ENCODE measurements at regions of chr6 and their contacts with region 1.

Region 1: DNA sequence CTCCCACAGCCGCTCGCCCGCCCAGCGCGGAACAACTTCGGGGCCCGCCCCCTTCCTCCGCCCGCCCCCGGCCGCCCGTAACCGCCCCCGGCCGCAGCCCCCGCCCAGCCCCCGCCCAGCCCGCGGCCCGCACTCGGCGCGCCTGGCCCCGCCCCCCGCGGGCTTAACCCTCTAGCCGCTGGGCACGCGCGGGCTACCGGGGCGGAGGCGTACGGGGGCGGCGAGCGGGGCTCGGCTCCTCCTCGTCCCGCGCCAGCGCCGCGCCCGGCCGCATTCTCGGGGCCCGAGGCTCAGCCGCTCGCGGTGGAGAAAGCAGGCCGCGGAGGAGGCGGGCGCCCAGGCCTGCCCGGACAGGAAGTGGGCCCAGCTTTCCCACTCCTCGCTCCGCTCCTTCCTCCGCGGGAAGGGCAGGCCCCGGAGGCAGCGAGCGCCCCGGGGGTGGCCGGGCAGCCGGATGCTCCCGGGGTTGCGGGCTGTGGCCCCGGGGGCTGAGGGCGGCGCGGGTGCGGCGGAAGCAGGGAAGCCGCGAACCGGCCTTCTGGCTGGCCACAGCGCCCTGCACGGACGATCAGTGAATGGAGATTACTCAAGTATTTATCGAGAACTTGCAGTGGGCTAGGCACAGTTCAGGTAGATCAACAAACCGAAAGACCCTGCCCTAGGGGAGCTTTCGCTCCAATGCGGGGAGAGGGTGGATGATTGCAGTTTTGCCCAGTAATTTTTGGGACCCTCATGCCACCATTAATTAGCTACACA is at the start of gene TRAM2:
- DNase-seq: peak in 41 of 42 donors; percentile 41 to 91 (median 80)

Region 2: DNA sequence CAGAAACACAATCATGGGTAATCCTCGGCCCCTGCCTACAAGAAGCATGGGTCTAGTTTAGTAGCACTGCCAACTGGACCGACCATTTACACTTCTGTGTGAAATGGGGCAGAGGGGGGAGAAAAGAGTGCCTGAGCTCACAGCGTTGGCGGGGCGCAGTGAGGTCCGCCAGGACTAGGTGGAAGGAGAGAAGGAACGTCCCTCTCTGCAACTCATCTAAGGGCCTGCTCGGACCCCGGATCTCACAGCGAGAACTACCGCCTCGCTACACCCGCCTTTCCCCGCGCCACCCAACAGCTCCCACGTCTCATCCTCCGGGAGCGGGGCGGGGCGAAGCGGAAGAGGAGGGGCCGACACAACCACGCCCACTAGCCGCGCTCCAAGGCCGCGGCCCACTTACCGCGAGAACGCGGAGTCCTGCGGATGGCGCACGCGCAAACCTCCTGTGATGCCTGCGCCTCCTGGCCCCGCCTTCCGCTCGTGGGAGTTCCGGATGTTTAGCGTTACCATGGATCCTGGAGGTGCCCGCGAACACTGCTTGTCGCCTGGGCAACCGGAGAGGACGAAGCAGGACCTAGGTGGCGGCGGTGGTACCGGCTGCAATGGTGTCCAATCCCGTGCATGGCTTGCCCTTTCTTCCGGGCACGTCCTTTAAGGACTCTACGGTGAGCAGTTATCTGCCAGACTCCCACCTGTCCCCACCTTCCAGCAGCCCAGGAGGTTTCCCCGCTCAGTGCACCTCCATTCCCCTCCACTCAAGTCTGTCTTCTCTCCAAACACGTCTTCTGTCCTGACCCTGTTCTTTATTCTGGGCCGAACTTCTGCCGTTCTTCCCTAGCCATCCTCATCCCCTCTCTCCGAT is 157.2 kb before region 1 on chr6 and contains the start of gene EFHC1:
- intact Hi-C with region 1: loop called (anchors 5 kb)
- DNase-seq: peak; percentile 95 to 99 (median 98)

Region 3: DNA sequence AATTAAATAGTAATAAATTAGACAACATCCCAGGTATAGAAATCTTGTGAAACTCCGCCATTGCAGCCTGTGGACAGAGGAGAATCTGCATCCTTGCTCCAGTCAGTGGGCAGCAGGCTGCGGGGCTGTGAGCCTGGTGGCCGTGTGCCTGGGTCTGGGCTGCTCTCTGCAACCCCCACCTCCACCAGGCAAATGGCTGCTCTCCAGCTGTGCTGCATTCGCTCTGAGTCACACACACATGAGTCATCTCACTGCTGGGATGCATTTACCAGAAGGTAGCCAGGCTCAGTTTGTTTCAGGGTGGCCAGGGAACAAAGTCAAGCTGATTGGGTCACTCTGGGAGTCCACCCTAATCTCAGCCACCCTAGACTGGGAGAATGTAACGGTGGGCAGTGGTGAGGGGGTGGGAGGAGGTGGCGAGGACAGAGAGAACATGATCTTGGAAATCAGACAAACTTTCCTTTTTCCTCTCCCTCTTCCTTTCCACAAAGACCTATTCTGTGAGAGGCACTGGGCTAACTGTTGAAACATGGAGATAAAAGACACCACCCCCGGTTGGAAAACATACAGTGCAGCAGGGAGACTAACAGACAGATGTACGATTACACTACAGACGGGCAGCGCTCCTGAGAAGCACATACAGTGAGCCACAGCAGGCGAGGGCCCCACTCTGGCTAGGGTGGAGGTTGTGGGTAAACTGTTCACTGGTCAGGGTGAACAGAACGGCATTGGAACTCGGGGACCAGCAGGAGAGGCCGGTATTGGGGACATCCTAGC is 59.5 kb before region 1 on chr6:
- intact Hi-C with region 1: loop called (anchors 10 kb)
- DNase-seq: peak; percentile 55 to 95 (median 77)

Region 4: GRCh38 chr6:52664186-52664990 is 87.2 kb after region 1 on chr6:
- intact Hi-C with region 1: no loop called
- DNase-seq: peak; percentile 74 to 93 (median 85)

Measured in head of caudate nucleus (tissue), 42 donors.